ENCODE measurements at regions of chr1 and their contacts with region 1.

Region 1: GRCh38 chr1:113545210-113545609 is 154.9 kb downstream of the MAGI3 start:
- DNase-seq: no peak
- H3K4me3 ChIP-seq: no peak overlapping the region
- H3K27ac ChIP-seq: no peak overlapping the region
- H3K27me3 ChIP-seq: no peaks in the 10 kb centered on the region
- CTCF ChIP-seq: no peak

Region 2: DNA sequence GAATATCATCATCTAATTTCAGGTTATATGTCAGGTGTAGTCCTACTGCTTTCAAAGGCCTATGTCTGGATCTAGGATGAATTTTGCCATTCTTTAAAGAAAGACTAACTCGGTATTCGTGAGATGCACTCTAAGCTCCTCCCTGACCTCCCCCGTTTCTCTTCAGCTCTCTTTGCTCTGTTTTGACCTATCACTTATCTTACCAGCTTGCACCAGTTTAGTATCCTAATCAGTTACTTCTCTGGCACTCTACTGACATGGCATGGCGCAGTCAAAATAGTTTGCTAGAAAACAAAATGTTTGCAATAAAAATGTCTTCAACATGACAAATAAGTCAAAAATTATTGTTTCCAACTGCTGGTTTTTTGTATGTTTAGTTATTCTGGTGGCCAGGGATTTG is 580.9 kb before region 1 on chr1:
- CTCF ChIA-PET with region 1: no interaction called
- POLR2A ChIA-PET with region 1: interaction called, 11 read pairs
- DNase-seq: no peak
- H3K4me3 ChIP-seq: no peak overlapping the region
- H3K27ac ChIP-seq: no peak overlapping the region
- H3K27me3 ChIP-seq: no peaks in the 10 kb centered on the region
- CTCF ChIP-seq: no peak

Region 3: DNA sequence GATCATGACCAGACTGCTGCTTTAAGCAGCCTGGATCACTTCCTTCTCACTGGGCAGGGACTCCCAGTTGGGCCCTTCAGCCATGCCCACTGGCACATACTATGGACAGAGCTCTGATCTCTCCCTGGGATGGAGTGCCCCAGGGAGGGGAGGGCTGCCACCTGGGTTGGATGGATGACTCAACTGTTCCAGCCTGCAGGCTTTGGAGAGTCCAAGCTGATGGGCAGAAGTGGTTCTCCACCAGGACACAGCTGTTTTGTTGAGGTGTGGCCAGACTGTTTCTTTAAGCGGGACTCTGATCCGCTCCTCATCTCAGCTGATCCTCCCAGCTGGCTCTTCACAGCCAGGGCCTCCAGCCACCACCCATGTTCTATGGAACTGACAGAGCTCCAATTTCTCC is 12.0 kb after region 1 on chr1:
- CTCF ChIA-PET with region 1: no interaction called
- POLR2A ChIA-PET with region 1: no interaction called
- DNase-seq: no peak
- H3K4me3 ChIP-seq: no peak overlapping the region
- H3K27ac ChIP-seq: no peak overlapping the region
- H3K27me3 ChIP-seq: no peaks in the 10 kb centered on the region
- CTCF ChIP-seq: no peak

Region 4: DNA sequence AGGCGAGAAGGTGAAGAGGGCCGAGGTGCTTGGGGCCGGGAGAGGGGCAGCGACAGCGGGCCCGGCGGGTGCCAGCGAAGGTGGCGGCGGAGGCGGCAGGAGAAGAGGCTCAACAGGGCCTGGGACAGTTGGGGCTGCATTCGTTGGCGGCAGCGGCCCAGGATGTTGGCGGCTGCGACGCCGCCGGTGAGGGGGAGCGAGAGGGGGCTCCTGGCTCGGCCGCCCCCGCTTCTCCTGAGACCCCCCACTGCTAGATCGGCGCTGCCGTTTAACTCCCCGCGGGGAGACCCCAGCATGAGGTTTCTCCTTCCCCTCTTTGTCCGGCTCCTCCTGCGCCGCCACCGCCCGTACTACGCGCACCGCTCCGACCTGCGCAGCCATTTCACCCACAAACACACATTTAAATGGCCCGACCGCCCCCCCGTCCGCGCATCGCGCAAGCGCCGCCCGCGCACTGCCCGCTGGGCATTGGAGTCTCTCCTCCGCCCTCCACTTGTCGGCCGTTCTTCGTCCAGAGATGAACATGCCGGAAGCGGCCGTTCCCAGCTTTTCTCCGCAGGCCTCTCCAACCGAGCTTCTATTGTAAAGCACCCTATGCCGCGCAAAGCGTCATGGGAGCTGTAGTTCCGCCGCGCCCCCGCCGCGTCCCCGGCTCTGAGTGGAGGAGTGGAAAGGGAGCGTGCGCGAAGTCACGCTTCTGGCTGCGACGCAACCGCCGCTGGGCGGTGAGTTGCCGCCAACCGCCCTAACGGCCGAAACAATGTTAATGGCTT is 266.9 kb after region 1 on chr1 and contains the start of gene RSBN1:
- CTCF ChIA-PET with region 1: no interaction called
- POLR2A ChIA-PET with region 1: no interaction called
- DNase-seq: peak; percentile 97
- H3K4me3 ChIP-seq: peak within 1 kb of the TSS; percentile 86
- H3K27ac ChIP-seq: peak within 1 kb of the TSS; percentile 70
- H3K27me3 ChIP-seq: no peaks in the 10 kb centered on the region
- CTCF ChIP-seq: no peak
- polyA plus RNA-seq, gene RSBN1: 6.3 and 12.2 TPM in 2 replicates